ENCODE measurements at regions of chr10 and their contacts with region 1.

Region 1: DNA sequence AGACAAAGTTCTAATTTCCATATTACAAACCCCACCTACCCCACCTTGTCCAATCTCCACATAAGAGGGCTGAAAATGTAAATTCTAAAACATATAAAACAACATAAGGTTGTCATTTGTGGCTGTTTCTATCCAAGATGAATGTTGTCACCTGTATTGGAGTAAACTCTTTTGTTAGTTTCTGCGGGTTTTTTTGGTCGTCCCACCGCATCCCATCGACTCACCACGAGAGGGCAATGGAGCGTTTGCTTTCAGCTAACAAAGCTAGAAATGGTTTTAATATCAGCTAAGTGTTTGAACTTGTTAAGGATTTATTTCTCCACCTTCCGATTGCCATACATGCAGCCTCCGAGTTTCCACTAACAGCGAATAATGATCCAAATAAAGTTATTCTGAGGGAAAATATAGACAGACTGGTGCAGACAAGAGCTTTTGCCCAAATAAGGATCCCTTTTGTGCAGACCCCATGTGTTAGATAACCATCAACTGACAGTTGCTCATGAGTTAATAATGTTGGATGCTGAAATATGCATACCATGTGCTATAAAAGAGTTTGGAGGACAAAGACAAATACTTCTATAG is 137.2 kb downstream of the ARID5B start:
- DNase-seq: peak; percentile 65 to 88 (median 72)
- ATAC-seq: peak; percentile 84
- H3K4me3 ChIP-seq: peak overlapping the region; percentile 29
- H3K4me3 Mint-ChIP-seq: peak overlapping the region; percentile 72
- H3K27ac ChIP-seq: no peak overlapping the region
- H3K27ac Mint-ChIP-seq: peak overlapping the region; percentile 68
- H3K4me1 ChIP-seq: peaks cover 54% of the 10 kb centered on the region
- H3K4me1 Mint-ChIP-seq: peaks cover 87% of the 10 kb centered on the region
- H3K27me3 ChIP-seq: no peaks in the 10 kb centered on the region
- H3K27me3 Mint-ChIP-seq: no peaks in the 10 kb centered on the region
- CTCF ChIP-seq: peak; percentile 82

Region 2: GRCh38 chr10:61842755-61843497 is 195.8 kb before region 1 on chr10:
- CTCF ChIA-PET with region 1: no interaction called
- POLR2A ChIA-PET with region 1: no interaction called
- intact Hi-C with region 1: no loop called
- DNase-seq: no peak
- ATAC-seq: no peak
- H3K4me3 ChIP-seq: no peak overlapping the region
- H3K4me3 Mint-ChIP-seq: no peak overlapping the region
- H3K27ac ChIP-seq: no peak overlapping the region
- H3K27ac Mint-ChIP-seq: no peak overlapping the region
- H3K4me1 ChIP-seq: no peaks in the 10 kb centered on the region
- H3K4me1 Mint-ChIP-seq: peaks cover 7% of the 10 kb centered on the region
- H3K27me3 ChIP-seq: no peaks in the 10 kb centered on the region
- H3K27me3 Mint-ChIP-seq: no peaks in the 10 kb centered on the region
- CTCF ChIP-seq: no peak

Region 3: DNA sequence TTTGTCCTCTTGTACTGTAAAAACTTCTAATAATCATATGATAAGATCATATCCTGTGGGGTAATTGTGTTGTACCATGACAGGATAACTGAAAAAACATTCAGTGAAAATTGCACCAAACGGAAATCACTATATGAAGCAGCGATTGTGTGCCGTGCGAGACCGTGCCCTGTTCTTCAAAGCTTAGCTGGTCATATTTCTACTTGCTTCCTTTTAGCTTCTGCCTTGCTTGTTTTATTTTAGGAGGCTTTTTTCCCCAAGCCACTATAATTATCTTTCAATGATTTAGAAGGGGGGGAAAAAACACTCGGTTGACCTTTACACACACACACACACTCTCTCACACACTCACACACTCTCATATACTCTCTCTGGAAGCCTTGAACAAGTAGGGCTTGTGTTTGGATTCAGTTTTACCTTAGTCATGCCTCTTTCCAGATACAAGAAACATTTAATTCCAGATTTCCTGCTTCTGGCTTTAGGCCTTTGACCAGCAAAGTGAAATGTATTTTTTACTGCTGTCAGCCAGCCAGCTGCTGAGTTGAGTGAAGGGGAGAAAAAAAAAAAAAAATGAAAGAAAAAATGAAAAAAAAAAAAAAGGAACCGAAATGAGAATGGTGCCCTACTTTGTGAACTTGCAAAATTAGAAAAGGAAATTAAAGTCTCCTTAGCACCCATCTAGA is 44.2 kb after region 1 on chr10:
- CTCF ChIA-PET with region 1: interaction called, 6 read pairs
- POLR2A ChIA-PET with region 1: interaction called, 4 read pairs
- intact Hi-C with region 1: loop called (anchors 5 to 10 kb)
- DNase-seq: peak in 12 of 14 experiments; percentile 17 to 83 (median 36)
- ATAC-seq: peak; percentile 88
- H3K4me3 ChIP-seq: peak overlapping the region; percentile 32
- H3K4me3 Mint-ChIP-seq: peak overlapping the region; percentile 42
- H3K27ac ChIP-seq: peak overlapping the region; percentile 31 to 80
- H3K27ac Mint-ChIP-seq: peak overlapping the region; percentile 82
- H3K4me1 ChIP-seq: peaks cover 34% of the 10 kb centered on the region
- H3K4me1 Mint-ChIP-seq: peaks cover 65% of the 10 kb centered on the region
- H3K27me3 ChIP-seq: no peaks in the 10 kb centered on the region
- H3K27me3 Mint-ChIP-seq: no peaks in the 10 kb centered on the region
- CTCF ChIP-seq: no peak

Region 4: DNA sequence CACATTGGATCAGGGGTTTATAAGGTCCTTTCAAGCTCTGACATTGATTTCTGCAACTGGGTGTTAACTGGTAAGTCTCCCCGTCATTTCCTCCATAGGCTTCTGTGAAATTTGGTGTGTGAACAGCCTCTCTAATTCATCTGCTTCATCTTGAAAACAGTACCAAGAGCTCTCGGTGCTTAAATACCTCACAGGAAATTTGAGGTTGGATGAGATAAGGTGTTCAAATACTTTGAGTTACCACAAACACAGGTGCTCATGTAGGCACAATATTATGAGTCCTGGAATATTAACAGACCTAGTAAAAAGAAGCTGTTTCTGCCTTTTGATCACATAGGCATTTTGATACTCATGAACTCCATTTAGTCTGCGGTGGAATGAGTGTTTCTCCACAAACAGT is 144.7 kb after region 1 on chr10:
- CTCF ChIA-PET with region 1: interaction called, 8 read pairs
- POLR2A ChIA-PET with region 1: interaction called, 14 read pairs
- intact Hi-C with region 1: loop called (anchors 1 to 5 kb)
- DNase-seq: peak in 10 of 14 experiments; percentile 16 to 92 (median 37)
- ATAC-seq: peak; percentile 85
- H3K4me3 ChIP-seq: no peak overlapping the region
- H3K4me3 Mint-ChIP-seq: peak overlapping the region; percentile 21
- H3K27ac ChIP-seq: peak overlapping the region; percentile 37 to 38
- H3K27ac Mint-ChIP-seq: peak overlapping the region; percentile 86
- H3K4me1 ChIP-seq: peaks cover 45% of the 10 kb centered on the region
- H3K4me1 Mint-ChIP-seq: peaks cover 91% of the 10 kb centered on the region
- H3K27me3 ChIP-seq: no peaks in the 10 kb centered on the region
- H3K27me3 Mint-ChIP-seq: no peaks in the 10 kb centered on the region
- CTCF ChIP-seq: no peak

Region 5: GRCh38 chr10:62244780-62245467 is 206.2 kb after region 1 on chr10:
- CTCF ChIA-PET with region 1: interaction called, 74 read pairs
- POLR2A ChIA-PET with region 1: interaction called, 38 read pairs
- intact Hi-C with region 1: loop called (anchors 1 kb)
- DNase-seq: peak in 11 of 14 experiments; percentile 15 to 82 (median 35)
- ATAC-seq: peak; percentile 92
- H3K4me3 ChIP-seq: no peak overlapping the region
- H3K4me3 Mint-ChIP-seq: peak overlapping the region; percentile 5
- H3K27ac ChIP-seq: no peak overlapping the region
- H3K27ac Mint-ChIP-seq: peak overlapping the region; percentile 18
- H3K4me1 ChIP-seq: peaks cover 4% of the 10 kb centered on the region
- H3K4me1 Mint-ChIP-seq: peaks cover 39% of the 10 kb centered on the region
- H3K27me3 ChIP-seq: no peaks in the 10 kb centered on the region
- H3K27me3 Mint-ChIP-seq: no peaks in the 10 kb centered on the region
- CTCF ChIP-seq: peak; percentile 92

Region 6: GRCh38 chr10:62384057-62384446 is 345.4 kb after region 1 on chr10:
- CTCF ChIA-PET with region 1: no interaction called
- POLR2A ChIA-PET with region 1: no interaction called
- intact Hi-C with region 1: loop called in 1 of 2 experiments (anchors 10 kb)
- DNase-seq: peak in 11 of 14 experiments; percentile 9 to 87 (median 25)
- ATAC-seq: peak; percentile 92
- H3K4me3 ChIP-seq: peak overlapping the region; percentile 8
- H3K4me3 Mint-ChIP-seq: peak overlapping the region; percentile 3
- H3K27ac ChIP-seq: peak overlapping the region in 1 of 2 donors; percentile 47
- H3K27ac Mint-ChIP-seq: peak overlapping the region; percentile 68
- H3K4me1 ChIP-seq: peaks cover 9% of the 10 kb centered on the region
- H3K4me1 Mint-ChIP-seq: peaks cover 25% of the 10 kb centered on the region
- H3K27me3 ChIP-seq: no peaks in the 10 kb centered on the region
- H3K27me3 Mint-ChIP-seq: no peaks in the 10 kb centered on the region
- CTCF ChIP-seq: no peak

Region 7: GRCh38 chr10:62437696-62438095 is 399.0 kb after region 1 on chr10:
- CTCF ChIA-PET with region 1: interaction called, 3 read pairs
- POLR2A ChIA-PET with region 1: no interaction called
- intact Hi-C with region 1: loop called in 1 of 2 experiments (anchors 10 kb)
- DNase-seq: peak in 5 of 14 experiments; percentile 0 to 74 (median 73)
- ATAC-seq: peak; percentile 59
- H3K4me3 ChIP-seq: no peak overlapping the region
- H3K4me3 Mint-ChIP-seq: no peak overlapping the region
- H3K27ac ChIP-seq: no peak overlapping the region
- H3K27ac Mint-ChIP-seq: no peak overlapping the region
- H3K4me1 ChIP-seq: no peaks in the 10 kb centered on the region
- H3K4me1 Mint-ChIP-seq: no peaks in the 10 kb centered on the region
- H3K27me3 ChIP-seq: no peaks in the 10 kb centered on the region
- H3K27me3 Mint-ChIP-seq: peaks cover 7% of the 10 kb centered on the region
- CTCF ChIP-seq: peak; percentile 83

Measured in CD4-positive, alpha-beta T cell (primary cell).